A549 (cell line): ENCODE measurements at regions of chr17 and their contacts with region 1.

Region 1: DNA sequence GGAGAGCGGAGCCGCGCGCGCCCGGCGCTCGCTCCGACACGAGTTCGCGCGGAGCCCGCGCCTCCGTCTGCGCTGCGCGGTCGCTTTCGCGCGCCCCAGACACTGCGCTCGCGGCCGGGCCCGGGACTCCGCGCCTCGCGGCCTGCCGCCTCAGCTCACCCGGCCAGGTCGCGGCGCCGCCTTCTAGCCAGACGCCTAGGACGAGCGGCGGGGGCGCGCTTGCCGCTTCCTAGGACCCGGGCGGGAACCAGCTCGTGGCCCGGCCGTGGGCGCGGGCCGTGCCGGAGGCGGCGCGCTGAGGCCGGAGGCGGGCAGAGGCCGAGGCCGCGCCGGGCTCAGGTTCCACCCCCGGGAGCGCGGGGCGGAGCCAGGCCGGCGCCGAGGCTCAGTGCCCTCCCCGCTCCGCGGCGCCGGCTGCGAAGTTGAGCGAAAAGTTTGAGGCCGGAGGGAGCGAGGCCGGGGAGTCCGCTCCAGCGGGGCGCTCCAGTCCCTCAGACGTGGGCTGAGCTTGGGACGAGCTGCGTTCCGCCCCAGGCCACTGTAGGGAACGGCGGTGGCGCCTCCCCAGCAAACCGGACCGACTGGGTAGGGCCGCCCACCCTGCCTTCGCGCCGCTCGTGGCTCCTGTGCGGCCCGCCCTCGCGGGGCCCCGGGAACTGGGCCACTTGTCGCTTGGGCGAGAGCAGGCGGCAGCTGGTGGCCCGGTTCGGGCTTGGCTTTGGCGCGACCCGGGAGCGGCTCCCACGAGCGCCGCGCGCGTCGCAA is at the start of gene SPHK1:
- DNase-seq: peak; percentile 84 to 90
- ATAC-seq: peak; percentile 57 to 69
- H3K4me3 ChIP-seq: peak within 1 kb of the TSS; percentile 62
- H3K27ac ChIP-seq: peak within 1 kb of the TSS; percentile 71 to 88
- H3K4me1 ChIP-seq: peaks cover 20% of the 10 kb centered on the region
- CTCF ChIP-seq: no peak; the same call in 2 of the 3 replicates
- EP300 ChIP-seq: no peak
- POLR2A ChIP-seq: peak; percentile 55; the same call in 1 of the 2 replicates
- RAD21 ChIP-seq: no peak
- polyA plus RNA-seq, gene SPHK1: 4.6 and 4.7 TPM in 2 replicates

Region 2: DNA sequence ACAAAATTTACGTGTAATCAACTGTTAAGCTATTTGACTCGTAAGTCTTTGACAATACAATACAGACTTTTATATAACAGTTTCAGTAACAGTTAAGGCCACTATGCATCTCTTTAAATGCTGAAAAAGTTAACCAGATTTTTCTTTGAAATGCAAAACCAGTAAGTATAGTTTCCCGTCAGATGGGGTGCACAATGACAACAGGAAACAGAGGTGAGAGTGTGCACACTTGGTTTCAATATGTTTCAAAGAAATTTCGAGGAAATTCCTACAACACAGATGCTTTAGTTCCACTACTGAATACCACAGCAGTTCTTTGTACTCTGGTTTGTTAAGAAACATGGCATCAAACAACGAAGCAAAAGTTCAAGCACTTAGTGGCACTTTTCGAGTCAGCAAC is 192.5 kb before region 1 on chr17:
- CTCF ChIA-PET with region 1: no interaction called
- POLR2A ChIA-PET with region 1: no interaction called
- DNase-seq: no peak
- ATAC-seq: no peak
- H3K4me3 ChIP-seq: no peak overlapping the region
- H3K27ac ChIP-seq: no peak overlapping the region
- H3K4me1 ChIP-seq: no peaks in the 10 kb centered on the region
- CTCF ChIP-seq: no peak
- EP300 ChIP-seq: no peak
- POLR2A ChIP-seq: no peak
- RAD21 ChIP-seq: no peak

Region 3: DNA sequence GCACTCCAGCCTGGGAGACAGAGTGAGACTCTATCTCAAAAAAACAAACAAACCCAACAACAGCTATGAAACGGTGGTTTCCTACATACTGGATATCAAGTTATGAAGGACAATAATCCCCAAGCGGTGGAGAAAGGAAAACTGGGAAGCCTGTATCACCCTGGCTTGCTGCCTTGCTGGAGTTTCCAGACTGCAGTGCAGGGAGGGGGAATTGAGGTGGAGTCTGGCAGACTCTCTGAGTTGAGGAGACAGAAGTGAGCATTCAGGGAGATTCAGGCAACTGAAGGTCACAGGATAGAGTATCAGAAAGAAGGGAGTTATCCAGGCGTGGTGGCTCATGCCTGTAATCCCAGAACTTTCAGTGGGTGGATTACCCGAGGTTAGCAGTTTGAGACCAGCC is 88.2 kb before region 1 on chr17:
- CTCF ChIA-PET with region 1: interaction called, 252 read pairs
- POLR2A ChIA-PET with region 1: no interaction called
- DNase-seq: no peak
- ATAC-seq: no peak
- H3K4me3 ChIP-seq: no peak overlapping the region
- H3K27ac ChIP-seq: no peak overlapping the region
- H3K4me1 ChIP-seq: no peaks in the 10 kb centered on the region
- CTCF ChIP-seq: no peak
- EP300 ChIP-seq: no peak
- POLR2A ChIP-seq: no peak
- RAD21 ChIP-seq: no peak

Region 4: DNA sequence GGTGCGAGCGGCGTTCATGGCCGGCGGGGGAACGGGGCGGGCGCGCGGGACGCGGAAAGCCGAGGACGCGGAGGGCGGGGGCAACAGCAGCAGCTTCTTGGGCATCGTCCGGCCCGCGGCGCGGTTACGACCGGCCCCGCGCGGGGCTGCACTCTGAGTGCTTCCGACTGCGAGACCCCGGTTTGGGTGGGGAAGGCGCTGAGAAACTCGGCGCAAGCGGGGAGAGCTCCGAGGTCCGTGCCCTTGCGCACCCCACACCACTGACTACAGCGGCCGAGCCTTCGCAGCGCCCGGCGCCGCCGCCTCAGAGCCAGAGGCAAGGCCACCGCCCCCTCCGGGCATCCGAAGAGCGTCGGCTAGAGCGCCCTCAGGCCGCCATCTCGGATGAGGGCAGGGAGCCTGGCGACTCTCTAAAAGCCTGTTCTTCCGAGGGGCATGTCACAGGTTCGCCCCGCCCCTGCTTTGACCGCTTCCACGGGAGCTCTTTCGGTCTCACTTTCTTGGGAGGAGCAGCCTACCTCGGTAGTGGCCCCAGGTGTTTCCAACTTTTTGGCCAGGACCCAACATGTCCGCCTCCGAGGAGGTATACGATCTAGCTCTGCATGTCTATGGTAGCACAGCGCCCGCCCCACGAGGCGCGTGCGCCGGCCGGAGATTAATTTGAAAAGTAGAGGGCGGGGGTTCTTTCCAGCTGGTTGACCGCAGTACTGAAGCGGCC is 30.6 kb before region 1 on chr17 and contains the start of gene PRPSAP1:
- CTCF ChIA-PET with region 1: interaction called, 899 read pairs
- POLR2A ChIA-PET with region 1: interaction called, 24 read pairs
- DNase-seq: peak; percentile 95 to 98
- ATAC-seq: peak; percentile 97 to 98
- H3K4me3 ChIP-seq: peak within 1 kb of the TSS; percentile 83
- H3K27ac ChIP-seq: peak within 1 kb of the TSS; percentile 93 to 97
- H3K4me1 ChIP-seq: peaks cover 18% of the 10 kb centered on the region; the same call in 2 of the 3 replicates
- CTCF ChIP-seq: no peak
- EP300 ChIP-seq: no peak; a peak in 1 of 5 replicates
- POLR2A ChIP-seq: peak; percentile 98
- RAD21 ChIP-seq: no peak
- polyA plus RNA-seq, gene PRPSAP1: 80.9 and 92.1 TPM in 2 replicates

Region 5: DNA sequence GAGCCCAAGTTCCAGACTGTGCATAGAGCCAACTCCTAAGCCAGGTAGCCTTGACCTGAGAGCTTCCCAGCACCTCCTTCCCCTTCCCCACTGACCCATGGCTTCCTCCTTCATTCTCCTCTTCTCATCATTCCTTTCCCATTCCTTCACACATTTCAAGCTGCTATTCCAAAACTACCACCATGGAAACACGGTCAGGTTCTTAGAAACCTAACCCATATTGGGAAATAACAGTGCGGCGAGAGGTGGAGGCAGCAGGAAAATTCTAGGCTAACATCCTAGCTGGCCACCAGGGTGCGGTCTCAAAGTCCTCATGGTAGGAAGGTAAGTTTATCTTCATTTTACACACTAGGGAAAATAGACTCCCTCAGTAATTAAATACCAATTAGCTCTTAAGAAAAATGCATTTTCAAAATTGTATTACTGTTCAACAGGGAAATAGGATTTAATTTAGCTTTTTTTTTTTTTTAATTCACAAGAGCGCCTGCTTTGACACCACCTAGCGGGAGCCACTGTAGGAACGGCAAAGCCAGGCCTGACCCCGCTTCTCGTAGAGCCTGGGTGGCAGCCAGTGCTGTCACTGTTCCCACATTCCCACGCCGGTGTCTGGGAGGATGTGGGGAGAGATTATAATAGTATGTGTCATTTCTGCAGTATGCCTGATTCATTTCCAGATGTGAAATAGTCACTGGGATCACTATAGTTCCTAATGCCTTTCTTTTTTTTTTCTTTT is 14.0 kb before region 1 on chr17:
- CTCF ChIA-PET with region 1: interaction called, 1,094 read pairs
- POLR2A ChIA-PET with region 1: interaction called, 15 read pairs
- DNase-seq: peak; percentile 62 to 79
- ATAC-seq: peak; percentile 79 to 83
- H3K4me3 ChIP-seq: no peak overlapping the region
- H3K27ac ChIP-seq: no peak overlapping the region
- H3K4me1 ChIP-seq: peaks cover 6% of the 10 kb centered on the region; the same call in 2 of the 3 replicates
- CTCF ChIP-seq: peak; percentile 92
- EP300 ChIP-seq: no peak
- POLR2A ChIP-seq: no peak
- RAD21 ChIP-seq: peak; percentile 24 to 27; a peak in 2 of 5 replicates

Region 6: DNA sequence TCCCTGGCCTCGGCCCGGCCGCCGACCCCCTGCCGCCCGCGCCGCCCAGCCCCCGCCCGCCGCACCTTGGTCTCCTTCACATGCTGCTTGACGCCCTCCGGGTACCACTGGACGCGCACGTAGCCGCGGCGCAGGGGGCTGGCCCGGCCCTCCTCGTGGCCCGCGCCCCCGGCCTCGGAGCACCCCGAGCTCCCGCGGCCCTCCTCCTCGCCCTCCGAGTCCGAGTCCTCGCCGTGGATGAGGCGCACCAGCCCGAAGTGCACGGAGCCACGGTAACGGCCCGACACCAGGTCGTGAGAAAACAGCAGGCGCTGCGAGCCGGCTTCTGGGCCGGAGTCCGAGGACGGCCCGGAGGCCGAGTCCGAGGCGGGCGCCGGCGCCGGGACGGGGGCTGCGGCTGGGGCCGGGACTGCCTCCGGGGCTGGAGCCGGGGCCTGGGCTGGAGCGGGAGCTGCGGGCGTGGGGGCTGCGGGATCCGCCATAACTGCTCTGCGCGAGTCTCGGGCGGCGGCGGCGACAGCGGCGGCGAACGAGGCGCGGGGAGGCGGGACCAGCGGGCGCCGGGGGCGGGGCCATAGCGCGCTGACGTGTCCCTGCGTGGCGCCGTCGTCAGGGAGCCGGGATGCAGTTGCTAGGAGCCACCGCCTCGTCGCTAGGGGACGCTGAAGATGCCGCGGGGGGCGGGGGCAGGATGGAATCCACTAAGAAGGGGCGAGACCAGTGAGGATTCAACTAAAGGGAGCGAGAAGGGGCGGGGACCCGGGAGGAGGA is 68.4 kb after region 1 on chr17 and contains the start of gene UBE2O:
- CTCF ChIA-PET with region 1: interaction called, 46 read pairs
- POLR2A ChIA-PET with region 1: no interaction called
- DNase-seq: peak; percentile 94 to 96
- ATAC-seq: peak; percentile 91 to 93
- H3K4me3 ChIP-seq: peak within 1 kb of the TSS; percentile 84
- H3K27ac ChIP-seq: peak within 1 kb of the TSS; percentile 85 to 94
- H3K4me1 ChIP-seq: peaks cover 28% of the 10 kb centered on the region
- CTCF ChIP-seq: peak; percentile 44; the same call in 2 of the 3 replicates
- EP300 ChIP-seq: no peak
- POLR2A ChIP-seq: peak; percentile 56
- RAD21 ChIP-seq: no peak
- polyA plus RNA-seq, gene UBE2O: 22.0 and 28.8 TPM in 2 replicates

Region 7: DNA sequence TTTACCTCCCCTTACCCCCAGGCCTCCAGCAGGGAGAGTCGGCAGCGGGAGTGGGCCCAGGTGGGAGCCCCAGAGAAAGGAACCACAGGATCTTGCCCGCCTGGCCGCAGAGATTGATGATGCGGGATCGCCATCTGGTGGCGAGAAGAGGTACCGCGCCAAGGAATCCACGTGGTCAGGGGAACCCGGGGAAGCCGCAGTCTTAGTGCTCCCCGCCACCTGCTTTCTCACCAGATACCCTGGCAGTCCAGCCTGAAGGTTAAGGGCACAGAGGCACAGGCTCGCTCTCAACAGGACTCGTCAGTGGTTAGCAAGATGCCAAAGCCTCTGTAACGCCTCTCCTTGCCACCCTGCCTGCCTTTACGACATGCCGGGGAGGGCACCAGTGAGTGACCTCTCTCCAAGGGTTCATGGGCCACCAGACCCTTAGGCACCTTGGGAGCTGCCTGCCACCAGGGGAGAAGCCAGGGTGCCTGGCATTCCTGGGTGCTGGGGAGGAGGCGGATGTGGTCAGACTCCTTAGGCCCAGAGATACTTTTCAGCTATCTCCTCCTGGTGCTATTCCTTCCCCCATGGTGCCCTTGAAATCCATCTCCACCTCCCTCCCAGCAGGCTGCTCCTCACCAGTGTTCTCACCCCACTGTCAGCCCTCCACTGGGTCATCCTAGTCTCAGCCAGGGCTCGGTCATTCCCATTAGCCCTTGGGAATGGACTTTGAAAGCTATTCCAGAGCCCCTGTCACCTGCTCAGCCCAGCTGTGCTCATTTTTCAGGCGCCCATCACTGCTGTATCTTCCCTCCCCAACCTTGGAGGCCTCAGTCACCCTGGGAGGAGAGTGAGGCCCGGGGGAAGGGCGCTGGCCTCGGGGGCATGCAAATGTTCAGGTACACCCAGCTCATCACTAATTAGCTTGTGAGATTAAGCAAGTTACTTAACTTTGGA is 122.3 kb after region 1 on chr17:
- CTCF ChIA-PET with region 1: interaction called, 13 read pairs
- POLR2A ChIA-PET with region 1: no interaction called
- DNase-seq: peak; percentile 71 to 95
- ATAC-seq: peak; percentile 80 to 90
- H3K4me3 ChIP-seq: no peak overlapping the region
- H3K27ac ChIP-seq: peak overlapping the region; percentile 52 to 73; a peak in 5 of 6 replicates
- H3K4me1 ChIP-seq: peaks cover 9% of the 10 kb centered on the region
- CTCF ChIP-seq: peak; percentile 98
- EP300 ChIP-seq: no peak
- POLR2A ChIP-seq: no peak
- RAD21 ChIP-seq: peak; percentile 99

Region 8: GRCh38 chr17:76529224-76530094 is 145.1 kb after region 1 on chr17:
- CTCF ChIA-PET with region 1: no interaction called
- POLR2A ChIA-PET with region 1: no interaction called
- DNase-seq: no peak
- ATAC-seq: peak; percentile 19 to 37; a peak in 4 of 6 replicates
- H3K4me3 ChIP-seq: no peak overlapping the region
- H3K27ac ChIP-seq: peak overlapping the region; percentile 46 to 76; a peak in 4 of 6 replicates
- H3K4me1 ChIP-seq: peaks cover 22% of the 10 kb centered on the region
- CTCF ChIP-seq: no peak
- EP300 ChIP-seq: no peak
- POLR2A ChIP-seq: no peak
- RAD21 ChIP-seq: no peak